Activated T-helper 1 cell treated with anti-CD3 and anti-CD28 coated beads, Interleukin-12 subunit alpha, Interleukin-12 subunit beta, Interleukin-2, Interleukin-4 antibody, amounts not matched to agents 30 ng/mL and 10 ng/mL and 1 ng/mL, durations not matched to agents 14 hours and 24 hours and 36 hours (primary cell): ENCODE measurements at regions of chr10 and their contacts with region 1.

Region 1: GRCh38 chr10:51832652-51833383 is 133.4 kb upstream of the CSTF2T start:
- DNase-seq: peak; percentile 4
- H3K4me3 Mint-ChIP-seq: no peak overlapping the region
- H3K27ac Mint-ChIP-seq: no peak overlapping the region
- H3K4me1 Mint-ChIP-seq: peaks cover 9% of the 10 kb centered on the region
- H3K27me3 Mint-ChIP-seq: peaks cover 4% of the 10 kb centered on the region

Region 2: DNA sequence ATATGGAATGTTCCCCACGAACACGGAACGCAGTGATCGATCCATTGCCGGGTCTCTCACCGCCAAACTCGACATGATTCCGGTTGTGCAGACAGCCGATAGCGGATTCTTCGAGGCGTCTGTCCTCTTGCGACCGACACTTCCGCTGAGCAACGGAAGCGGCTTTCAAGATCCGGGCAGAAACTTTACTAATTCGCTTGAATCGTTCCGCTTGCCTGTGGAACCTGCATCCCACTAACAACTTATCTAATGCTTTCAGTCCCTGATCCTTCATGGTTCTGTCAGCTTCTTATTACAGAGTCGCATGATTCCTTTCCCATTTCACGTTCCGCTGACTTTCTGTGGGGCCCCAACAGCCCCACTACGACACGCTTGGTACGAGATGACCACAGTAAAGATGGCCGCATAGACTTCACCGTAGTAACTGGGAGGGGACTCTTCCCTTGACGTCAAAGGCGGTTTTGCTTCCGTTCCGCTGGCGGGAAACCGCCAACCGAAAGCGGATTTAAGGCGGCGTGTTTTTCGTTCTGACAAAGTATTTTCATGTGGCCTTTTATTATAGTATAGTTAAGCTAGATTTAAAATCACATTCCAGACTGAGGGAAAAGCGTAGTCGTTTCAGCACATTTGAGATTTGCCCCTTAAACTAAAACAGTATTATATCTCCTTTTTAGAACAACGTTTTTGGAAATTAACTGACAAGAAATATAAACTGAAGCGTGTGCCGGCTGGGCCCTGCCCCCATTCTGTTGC is 133.2 kb before region 1 on chr10 and contains the start of gene CSTF2T:
- intact Hi-C with region 1: loop called (anchors 1 kb)
- DNase-seq: peak; percentile 91
- H3K4me3 Mint-ChIP-seq: peak within 1 kb of the TSS; percentile 98
- H3K27ac Mint-ChIP-seq: peak within 1 kb of the TSS; percentile 100
- H3K4me1 Mint-ChIP-seq: peaks cover 68% of the 10 kb centered on the region
- H3K27me3 Mint-ChIP-seq: no peaks in the 10 kb centered on the region
- total RNA-seq, gene CSTF2T: 42.3 and 44.8 TPM in 2 replicates

Region 3: DNA sequence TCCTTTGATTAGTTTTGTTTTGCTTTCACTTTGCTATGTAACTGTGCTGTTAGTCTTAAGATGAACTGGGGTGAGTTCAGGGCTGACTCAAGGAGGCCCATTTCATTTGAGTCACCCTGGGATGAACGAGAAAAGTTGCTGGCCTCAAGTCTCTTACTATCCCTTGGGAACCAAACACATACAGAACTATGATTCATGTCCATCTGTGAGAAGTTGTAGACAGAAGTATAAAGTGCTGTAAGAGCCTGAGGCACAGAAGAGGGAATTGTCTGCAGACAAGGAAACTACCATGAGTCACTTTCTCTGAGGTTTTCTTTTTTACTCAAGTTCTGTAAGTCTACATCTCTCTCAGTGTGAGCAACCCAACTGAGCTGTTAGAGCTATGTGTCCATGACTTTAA is 46.4 kb after region 1 on chr10:
- intact Hi-C with region 1: loop called (anchors 1 kb)
- DNase-seq: peak; percentile 12
- H3K4me3 Mint-ChIP-seq: peak overlapping the region; percentile 67
- H3K27ac Mint-ChIP-seq: peak overlapping the region; percentile 52
- H3K4me1 Mint-ChIP-seq: peaks cover 26% of the 10 kb centered on the region
- H3K27me3 Mint-ChIP-seq: peaks cover 4% of the 10 kb centered on the region